ENCODE measurements at regions of chr19 and their contacts with region 1.

Region 1: GRCh38 chr19:14136509-14137281 is at the start of gene ASF1B:
- DNase-seq: peak; percentile 99
- ATAC-seq: peak; percentile 79
- H3K4me3 ChIP-seq: peak within 1 kb of the TSS; percentile 44 to 94 (median 77)
- H3K4me3 Mint-ChIP-seq: peak within 1 kb of the TSS; percentile 88
- H3K27ac ChIP-seq: peak within 1 kb of the TSS; percentile 88 to 93
- H3K27ac Mint-ChIP-seq: peak within 1 kb of the TSS; percentile 92
- H3K4me1 ChIP-seq: peaks cover 9 to 23% of the 10 kb centered on the region in 2 donors
- H3K4me1 Mint-ChIP-seq: peaks cover 18% of the 10 kb centered on the region
- H3K27me3 ChIP-seq: no peaks in the 10 kb centered on the region
- H3K27me3 Mint-ChIP-seq: no peaks in the 10 kb centered on the region
- CTCF ChIP-seq: peak; percentile 87
- total RNA-seq, gene ASF1B: 2.5 and 4.0 TPM in 2 replicates

Region 2: DNA sequence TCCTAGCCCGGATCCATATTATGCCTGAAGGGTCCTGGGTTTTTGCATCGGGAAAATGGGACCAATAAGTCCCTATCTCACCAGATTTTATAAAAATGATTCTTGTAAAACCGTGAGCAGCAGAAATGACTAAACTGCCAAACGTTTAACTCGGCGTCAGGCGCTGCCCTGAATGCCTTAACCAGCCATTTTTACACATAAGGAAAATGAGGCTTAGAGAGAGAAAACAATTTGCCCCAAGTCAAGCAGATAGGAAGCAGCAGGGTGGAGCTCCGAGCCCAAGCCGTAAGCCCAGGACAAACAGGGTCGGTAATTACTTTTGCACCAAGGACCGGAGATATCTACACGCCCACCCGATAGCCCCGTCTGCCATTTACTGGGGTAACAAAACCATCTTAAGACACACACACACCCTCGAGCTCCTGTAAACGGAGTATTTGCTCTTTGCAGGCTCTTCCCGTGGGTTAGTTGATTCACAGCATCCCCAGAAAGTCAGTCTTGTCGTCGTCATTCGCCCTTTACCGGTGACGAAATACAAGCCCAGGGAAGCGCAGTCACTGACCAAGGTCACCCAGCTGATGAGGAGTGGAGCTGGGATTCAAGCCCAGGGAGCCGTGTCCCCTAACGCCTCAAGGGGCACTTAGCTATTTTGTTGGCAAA is 388.4 kb before region 1 on chr19:
- CTCF ChIA-PET with region 1: no interaction called
- POLR2A ChIA-PET with region 1: no interaction called
- intact Hi-C with region 1: loop called (anchors 1 kb)
- DNase-seq: no peak
- ATAC-seq: no peak
- H3K4me3 ChIP-seq: peak overlapping the region; percentile 76 to 97 (median 86)
- H3K4me3 Mint-ChIP-seq: peak overlapping the region; percentile 90
- H3K27ac ChIP-seq: peak overlapping the region; percentile 71 to 94
- H3K27ac Mint-ChIP-seq: peak overlapping the region; percentile 82
- H3K4me1 ChIP-seq: peaks cover 11 to 15% of the 10 kb centered on the region in 2 donors
- H3K4me1 Mint-ChIP-seq: peaks cover 28% of the 10 kb centered on the region
- H3K27me3 ChIP-seq: no peaks in the 10 kb centered on the region
- H3K27me3 Mint-ChIP-seq: no peaks in the 10 kb centered on the region
- CTCF ChIP-seq: no peak

Region 3: DNA sequence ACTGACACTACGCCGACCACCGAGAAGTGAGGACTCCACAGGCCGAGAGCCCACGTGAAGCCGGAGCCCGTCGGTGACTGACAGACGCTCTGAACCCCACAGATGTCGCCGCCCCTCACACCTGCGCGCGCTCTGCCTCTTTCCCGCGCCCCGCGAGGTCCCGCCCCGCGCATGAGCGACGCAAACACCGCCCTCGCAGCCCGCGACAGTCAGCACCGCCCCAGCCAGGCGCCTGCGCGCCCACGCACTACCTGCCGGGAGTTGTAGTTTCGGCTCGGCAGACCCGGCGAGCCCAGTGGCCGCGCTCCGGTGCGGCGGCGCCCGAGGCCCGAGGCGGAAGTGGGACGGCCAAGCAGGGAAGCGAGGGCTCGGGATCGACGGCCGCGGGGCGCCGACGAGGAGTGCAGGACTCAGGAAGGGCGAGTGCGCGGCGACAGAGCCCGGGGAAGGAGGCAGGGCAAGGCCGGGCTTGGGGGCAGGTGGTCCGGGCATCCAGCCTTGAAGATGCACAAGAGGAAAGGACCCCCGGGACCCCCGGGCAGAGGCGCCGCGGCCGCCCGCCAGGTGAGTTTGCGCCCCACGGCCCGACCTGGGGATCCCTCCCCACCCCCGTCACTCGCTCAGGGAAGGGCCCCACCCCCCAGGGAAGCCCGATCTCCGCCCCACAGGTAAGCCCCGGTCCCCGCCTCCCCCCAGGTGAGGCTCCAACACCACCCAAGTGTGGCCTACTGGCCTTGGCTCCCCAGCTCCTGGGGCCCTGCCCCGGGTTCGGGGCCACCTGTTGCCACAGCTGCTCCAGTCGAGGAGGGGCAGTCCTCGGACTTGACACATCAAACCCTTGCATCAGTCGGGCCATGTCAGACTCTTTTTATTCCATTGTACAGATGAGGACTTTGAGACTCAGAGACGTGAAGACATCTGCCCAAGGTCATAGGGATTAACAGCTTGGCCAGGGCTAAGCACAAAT is 230.5 kb before region 1 on chr19 and contains the starts of genes BRME1 and CC2D1A:
- CTCF ChIA-PET with region 1: no interaction called
- POLR2A ChIA-PET with region 1: no interaction called
- intact Hi-C with region 1: loop called (anchors 1 kb)
- DNase-seq: peak; percentile 95
- ATAC-seq: peak; percentile 98
- H3K4me3 ChIP-seq: peak within 1 kb of the TSS; percentile 38 to 90 (median 82)
- H3K4me3 Mint-ChIP-seq: peak within 1 kb of the TSS; percentile 89
- H3K27ac ChIP-seq: peak within 1 kb of the TSS; percentile 52 to 62
- H3K27ac Mint-ChIP-seq: peak within 1 kb of the TSS; percentile 80
- H3K4me1 ChIP-seq: peaks cover 9 to 13% of the 10 kb centered on the region in 2 donors
- H3K4me1 Mint-ChIP-seq: peaks cover 13% of the 10 kb centered on the region
- H3K27me3 ChIP-seq: no peaks in the 10 kb centered on the region
- H3K27me3 Mint-ChIP-seq: no peaks in the 10 kb centered on the region
- CTCF ChIP-seq: no peak
- total RNA-seq, gene BRME1: 1.7 and 2.4 TPM in 2 replicates
- total RNA-seq, gene CC2D1A: 47.1 and 47.2 TPM in 2 replicates

Region 4: GRCh38 chr19:14091081-14091812 is 45.4 kb before region 1 on chr19:
- CTCF ChIA-PET with region 1: interaction called, 13 read pairs
- POLR2A ChIA-PET with region 1: interaction called, 7 read pairs
- intact Hi-C with region 1: loop called (anchors 2 kb)
- DNase-seq: peak; percentile 89
- ATAC-seq: peak; percentile 72
- H3K4me3 ChIP-seq: peak overlapping the region; percentile 81 to 89 (median 82)
- H3K4me3 Mint-ChIP-seq: peak overlapping the region; percentile 100
- H3K27ac ChIP-seq: peak overlapping the region; percentile 69 to 87
- H3K27ac Mint-ChIP-seq: peak overlapping the region; percentile 99
- H3K4me1 ChIP-seq: peaks cover 11 to 18% of the 10 kb centered on the region in 2 donors
- H3K4me1 Mint-ChIP-seq: peaks cover 15% of the 10 kb centered on the region
- H3K27me3 ChIP-seq: no peaks in the 10 kb centered on the region
- H3K27me3 Mint-ChIP-seq: no peaks in the 10 kb centered on the region
- CTCF ChIP-seq: peak; percentile 21

Region 5: GRCh38 chr19:14277608-14278007 is 140.9 kb after region 1 on chr19:
- CTCF ChIA-PET with region 1: no interaction called
- POLR2A ChIA-PET with region 1: no interaction called
- intact Hi-C with region 1: no loop called
- DNase-seq: no peak
- ATAC-seq: no peak
- H3K4me3 ChIP-seq: no peak overlapping the region
- H3K4me3 Mint-ChIP-seq: no peak overlapping the region
- H3K27ac ChIP-seq: no peak overlapping the region
- H3K27ac Mint-ChIP-seq: no peak overlapping the region
- H3K4me1 ChIP-seq: no peaks in the 10 kb centered on the region
- H3K4me1 Mint-ChIP-seq: peaks cover 3% of the 10 kb centered on the region
- H3K27me3 ChIP-seq: peaks cover 0 to 2% (median 0%) of the 10 kb centered on the region in 4 experiments
- H3K27me3 Mint-ChIP-seq: peaks cover 8% of the 10 kb centered on the region
- CTCF ChIP-seq: no peak

Region 6: DNA sequence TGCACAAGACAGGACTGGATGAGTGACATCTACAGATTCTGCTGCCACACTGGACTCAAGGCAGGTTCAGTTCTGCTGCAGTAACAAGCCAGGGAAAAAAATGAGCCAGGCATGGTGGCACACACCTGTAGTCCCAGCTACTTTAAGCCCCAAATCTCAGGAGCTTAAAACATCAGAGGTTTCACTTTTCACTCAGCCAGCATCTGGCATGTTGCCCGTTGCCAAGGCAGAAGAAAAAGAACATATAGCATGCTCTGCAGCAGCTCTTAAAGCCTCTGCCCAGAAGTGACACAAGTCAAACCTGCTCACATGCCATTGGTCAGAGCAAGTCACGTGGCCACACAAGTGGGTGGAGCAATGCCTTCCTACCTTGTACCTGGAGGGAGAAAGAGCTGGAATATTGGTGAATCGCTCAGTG is 229.8 kb after region 1 on chr19:
- CTCF ChIA-PET with region 1: no interaction called
- POLR2A ChIA-PET with region 1: interaction called, 4 read pairs
- intact Hi-C with region 1: loop called (anchors 5 kb)
- DNase-seq: peak; percentile 91
- ATAC-seq: peak; percentile 47
- H3K4me3 ChIP-seq: no peak overlapping the region
- H3K4me3 Mint-ChIP-seq: peak overlapping the region; percentile 40
- H3K27ac ChIP-seq: peak overlapping the region; percentile 63 to 100
- H3K27ac Mint-ChIP-seq: peak overlapping the region; percentile 87
- H3K4me1 ChIP-seq: peaks cover 67 to 80% of the 10 kb centered on the region in 2 donors
- H3K4me1 Mint-ChIP-seq: peaks cover 61% of the 10 kb centered on the region
- H3K27me3 ChIP-seq: no peaks in the 10 kb centered on the region
- H3K27me3 Mint-ChIP-seq: no peaks in the 10 kb centered on the region
- CTCF ChIP-seq: no peak

Region 7: DNA sequence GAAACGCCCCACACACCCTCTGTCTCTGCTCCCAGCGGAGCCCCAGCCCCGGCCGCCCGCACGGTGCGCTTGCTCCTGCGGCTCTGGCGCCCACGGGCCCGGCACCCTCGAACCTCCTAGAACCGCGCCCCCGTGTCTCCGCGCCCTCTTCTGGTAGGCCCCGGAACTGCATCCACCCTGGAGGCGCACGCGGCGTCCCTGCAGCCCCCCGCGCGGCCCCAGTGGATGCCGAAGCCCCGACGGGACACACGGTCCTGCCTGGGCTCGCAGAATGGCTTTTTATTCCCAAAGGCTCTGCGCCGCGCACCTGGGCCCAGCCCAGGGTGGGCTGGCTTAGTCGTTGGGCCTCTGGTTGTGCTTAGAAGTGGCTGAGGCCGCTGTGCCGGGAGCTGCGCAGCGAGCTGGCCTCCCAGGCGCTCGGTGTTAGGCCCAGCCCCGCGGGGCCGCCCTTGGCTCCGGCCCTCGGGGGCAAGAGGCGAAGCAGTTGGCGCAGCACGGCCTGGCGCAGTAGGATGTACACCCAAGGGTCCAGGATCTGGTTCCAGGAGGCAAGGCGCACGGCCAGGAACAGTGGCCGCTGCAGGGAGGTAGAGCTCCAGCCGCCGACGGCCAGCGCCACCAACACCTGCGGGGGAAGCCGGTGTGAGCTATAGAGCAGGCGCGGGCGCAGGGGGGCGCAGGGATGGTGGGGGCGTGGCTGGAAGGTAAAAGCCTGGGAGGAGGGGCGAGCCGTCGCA is 335.7 kb after region 1 on chr19:
- CTCF ChIA-PET with region 1: interaction called, 10 read pairs
- POLR2A ChIA-PET with region 1: no interaction called
- intact Hi-C with region 1: loop called (anchors 1 kb)
- DNase-seq: peak; percentile 87
- ATAC-seq: peak; percentile 83
- H3K4me3 ChIP-seq: peak overlapping the region in 3 of 5 experiments; percentile 24 to 46 (median 38)
- H3K4me3 Mint-ChIP-seq: peak overlapping the region; percentile 61
- H3K27ac ChIP-seq: no peak overlapping the region
- H3K27ac Mint-ChIP-seq: no peak overlapping the region
- H3K4me1 ChIP-seq: peaks cover 21 to 27% of the 10 kb centered on the region in 2 donors
- H3K4me1 Mint-ChIP-seq: peaks cover 27% of the 10 kb centered on the region
- H3K27me3 ChIP-seq: peaks cover 0 to 28% (median 14%) of the 10 kb centered on the region in 4 experiments
- H3K27me3 Mint-ChIP-seq: peaks cover 28% of the 10 kb centered on the region
- CTCF ChIP-seq: peak; percentile 99